ENCODE measurements at regions of chr13 and their contacts with region 1.

Region 1: DNA sequence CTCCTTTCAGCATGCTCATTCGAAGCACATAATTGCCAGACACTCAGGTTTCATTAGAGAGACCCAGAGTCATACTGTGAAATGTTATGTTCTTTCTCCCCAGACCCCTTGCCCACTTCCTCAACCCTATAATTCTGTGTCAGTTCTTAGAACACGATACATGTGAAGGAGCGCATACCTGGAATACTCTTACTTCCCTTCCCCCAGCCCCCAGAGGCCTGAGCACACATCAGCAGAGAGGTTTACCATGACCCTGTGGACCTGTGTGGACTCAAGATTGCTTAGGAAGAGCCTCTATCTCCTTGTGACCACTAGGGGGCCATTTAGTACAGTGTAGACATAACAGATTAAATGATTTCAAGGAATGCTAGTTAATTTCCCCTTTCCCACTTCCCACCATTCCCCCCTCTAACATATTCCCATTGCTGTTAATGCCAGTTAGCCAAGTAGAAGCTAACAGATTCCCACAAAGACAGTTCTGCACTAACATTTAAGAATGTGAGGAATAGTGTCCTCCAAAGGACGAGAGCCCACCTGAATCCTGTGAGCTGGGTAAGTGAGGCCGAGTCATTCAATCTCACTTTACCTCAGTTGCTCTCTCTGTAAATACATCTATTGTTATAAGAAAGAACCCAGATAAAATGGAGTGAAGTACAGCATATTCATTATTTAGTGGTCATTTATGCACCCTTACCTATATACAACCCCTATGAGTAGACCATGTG is 154.2 kb upstream of the MAB21L1 start:
- DNase-seq: no peak
- H3K4me3 ChIP-seq: no peak overlapping the region
- H3K27ac ChIP-seq: no peak overlapping the region
- H3K4me1 ChIP-seq: no peaks in the 10 kb centered on the region
- H3K27me3 ChIP-seq: no peaks in the 10 kb centered on the region
- CTCF ChIP-seq: peak in 2 of 3 experiments; percentile 34 to 48
- POLR2A ChIP-seq: no peak

Region 2: DNA sequence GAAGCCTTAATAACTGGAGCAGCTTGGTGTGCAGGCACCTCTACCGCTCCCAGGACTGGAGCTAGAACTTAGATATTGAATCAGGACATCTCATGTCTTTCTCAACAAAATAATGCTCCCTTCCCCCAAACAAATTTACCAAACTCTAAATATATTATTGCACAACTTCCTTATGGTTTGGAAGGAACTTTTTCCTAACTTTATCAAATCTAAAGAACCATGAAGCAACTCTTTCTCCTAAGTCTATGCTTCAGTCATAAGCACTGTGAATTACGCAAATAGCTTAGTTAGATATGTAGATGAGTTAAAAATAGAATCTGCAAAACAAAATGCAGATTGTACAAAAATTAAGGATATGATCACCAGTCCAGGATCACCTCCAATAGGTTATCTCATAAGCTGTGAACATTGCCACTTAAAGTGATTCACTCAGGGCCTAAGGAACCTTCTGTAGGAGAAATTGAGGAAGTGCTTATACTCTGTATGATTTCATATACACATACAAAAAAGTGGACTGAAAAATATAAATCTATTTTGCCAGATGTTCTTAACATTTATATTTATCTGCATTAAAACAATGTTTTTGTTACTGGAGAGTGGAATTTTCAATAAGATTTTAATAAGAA is 133.8 kb before region 1 on chr13:
- intact Hi-C with region 1: no loop called
- DNase-seq: no peak
- H3K4me3 ChIP-seq: no peak overlapping the region
- H3K27ac ChIP-seq: no peak overlapping the region
- H3K4me1 ChIP-seq: peaks cover 5% of the 10 kb centered on the region
- H3K27me3 ChIP-seq: no peaks in the 10 kb centered on the region
- CTCF ChIP-seq: no peak
- POLR2A ChIP-seq: no peak

Region 3: GRCh38 chr13:35789335-35790165 is 158.8 kb after region 1 on chr13:
- intact Hi-C with region 1: loop called (anchors 10 kb)
- DNase-seq: no peak
- H3K4me3 ChIP-seq: no peak overlapping the region
- H3K27ac ChIP-seq: no peak overlapping the region
- H3K4me1 ChIP-seq: peaks cover 16% of the 10 kb centered on the region
- H3K27me3 ChIP-seq: no peaks in the 10 kb centered on the region
- CTCF ChIP-seq: peak in 1 of 3 experiments; percentile 41
- POLR2A ChIP-seq: no peak